GM18951 (cell line): ENCODE measurements at regions of chr4 and their contacts with region 1.

Region 1: DNA sequence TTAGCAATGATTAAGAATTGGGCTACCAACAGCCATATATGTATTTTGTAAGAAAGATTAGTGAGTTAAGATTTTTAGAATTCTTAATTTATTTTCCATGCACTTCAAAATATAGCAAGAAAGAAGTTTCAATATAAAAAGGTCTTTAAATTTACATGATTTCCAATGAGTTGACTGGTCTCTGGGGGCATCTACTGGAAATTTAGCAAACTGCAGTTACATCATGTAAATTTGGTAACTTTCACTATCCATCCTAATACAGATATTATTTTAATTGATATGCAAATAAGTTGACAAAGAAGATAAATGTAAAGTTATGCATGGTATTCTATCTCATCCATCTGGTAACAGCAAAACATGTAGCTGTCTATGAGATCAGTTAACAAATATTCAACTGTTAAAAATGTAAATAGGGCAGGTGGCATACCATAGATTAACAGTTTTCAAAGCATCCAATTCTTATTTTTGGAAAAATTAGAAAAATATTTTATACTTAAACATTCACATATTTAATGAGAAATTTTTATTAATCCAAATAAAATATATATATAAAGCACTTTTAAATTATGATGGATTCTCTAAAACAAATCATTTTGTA is 29.1 kb downstream of the TTC29 start:
- POLR2A ChIP-seq: no peak

Region 2: DNA sequence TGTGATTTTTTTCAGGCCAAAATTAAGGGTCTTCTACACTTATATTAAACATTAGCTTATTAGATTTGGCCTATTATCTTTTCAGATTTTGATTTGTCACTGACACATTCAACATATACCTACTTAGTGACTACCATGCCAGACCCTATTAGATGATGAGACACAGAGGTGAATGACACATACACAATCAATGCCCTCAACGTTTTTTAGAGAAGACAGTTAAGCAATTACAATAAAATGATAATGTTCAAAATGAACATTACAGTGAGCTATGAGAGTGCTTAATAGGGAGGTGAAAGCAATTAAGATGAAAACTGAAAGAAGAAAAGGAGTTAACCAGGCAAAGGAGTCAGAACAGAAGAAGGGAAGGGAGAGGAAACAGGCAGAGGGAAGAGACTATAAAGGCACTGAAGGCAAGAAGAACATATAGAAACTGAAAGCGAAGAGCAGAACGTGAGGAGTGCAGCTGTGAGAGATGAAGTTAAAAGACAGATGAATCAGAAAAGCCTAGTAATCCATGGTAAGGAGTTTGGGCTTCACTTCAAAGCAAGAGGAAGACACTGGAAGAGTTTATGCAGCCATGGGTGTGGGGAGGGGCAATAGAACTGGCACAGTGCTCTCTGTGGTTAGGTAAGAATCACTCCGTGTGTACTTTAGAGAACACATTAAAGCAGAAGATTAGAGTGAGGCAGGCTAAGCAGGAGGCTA is 583.2 kb before region 1 on chr4:
- in situ Hi-C with region 1: loop called (anchors 10 kb)
- POLR2A ChIP-seq: no peak